PC-9 (cell line): ENCODE measurements at regions of chr4 and their contacts with region 1.

Region 1: GRCh38 chr4:85498068-85498733 is 23.3 kb downstream of the ARHGAP24 start:
- DNase-seq: peak; percentile 40 to 82
- H3K4me3 ChIP-seq: peak overlapping the region; percentile 31; the same call in 1 of the 2 replicates
- H3K27ac ChIP-seq: peak overlapping the region; percentile 91
- H3K4me1 ChIP-seq: peaks cover 44% of the 10 kb centered on the region
- H3K27me3 ChIP-seq: no peaks in the 10 kb centered on the region
- CTCF ChIP-seq: no peak

Region 2: GRCh38 chr4:85474818-85475630 is 23.2 kb before region 1 on chr4 and contains the start of gene ARHGAP24:
- CTCF ChIA-PET with region 1: interaction called, 3 read pairs
- POLR2A ChIA-PET with region 1: interaction called, 5 read pairs
- intact Hi-C with region 1: loop called (anchors 2 kb)
- DNase-seq: peak; percentile 88 to 93
- H3K4me3 ChIP-seq: peak within 1 kb of the TSS; percentile 81
- H3K27ac ChIP-seq: peak within 1 kb of the TSS; percentile 64
- H3K4me1 ChIP-seq: peaks cover 12% of the 10 kb centered on the region
- H3K27me3 ChIP-seq: no peaks in the 10 kb centered on the region
- CTCF ChIP-seq: no peak
- total RNA-seq, gene ARHGAP24: 2.2 and 5.4 TPM in 2 replicates